CD8-positive, alpha-beta T cell (primary cell): ENCODE measurements at regions of chr6 and their contacts with region 1.

Region 1: GRCh38 chr6:75526502-75527127 is 33.0 kb upstream of the FILIP1 start:
- DNase-seq: peak in 8 of 9 experiments; percentile 12 to 76 (median 42)
- ATAC-seq: peak; percentile 84
- H3K4me3 ChIP-seq: no peak overlapping the region
- H3K4me3 Mint-ChIP-seq: no peak overlapping the region
- H3K27ac ChIP-seq: no peak overlapping the region
- H3K27ac Mint-ChIP-seq: no peak overlapping the region
- H3K4me1 ChIP-seq: no peaks in the 10 kb centered on the region
- H3K4me1 Mint-ChIP-seq: no peaks in the 10 kb centered on the region
- H3K27me3 ChIP-seq: peaks cover 0 to 3% of the 10 kb centered on the region in 2 experiments
- H3K27me3 Mint-ChIP-seq: peaks cover 36% of the 10 kb centered on the region
- CTCF ChIP-seq: peak; percentile 66

Region 2: DNA sequence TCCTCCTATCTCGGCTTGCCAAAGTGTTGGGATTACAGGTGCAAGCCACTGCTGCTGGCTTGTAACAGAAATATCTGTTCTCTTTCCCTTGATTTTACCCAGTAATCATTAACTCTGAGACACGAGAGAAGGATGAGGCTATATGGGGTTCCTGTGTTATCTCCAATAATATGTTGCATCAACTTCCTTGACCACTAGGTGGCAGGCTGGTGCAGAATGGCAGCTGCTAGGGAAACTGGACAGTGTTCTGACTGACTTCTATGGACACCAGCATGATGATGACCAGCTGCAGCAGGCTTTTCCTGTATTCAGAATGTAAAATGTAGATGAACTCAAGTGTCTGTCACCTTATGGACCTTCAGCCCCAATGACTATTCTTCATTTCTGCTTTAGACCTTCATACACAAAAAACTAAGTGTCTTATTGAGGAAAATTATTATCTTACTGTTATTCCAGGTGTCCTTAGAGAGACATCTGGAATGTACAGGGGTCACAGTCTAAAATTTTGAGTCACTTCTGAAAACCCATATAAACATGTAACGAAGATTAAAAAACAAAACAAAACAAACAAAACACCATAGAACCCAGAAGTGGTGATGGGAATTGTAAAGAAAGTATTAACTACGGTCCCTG is 1851.0 kb before region 1 on chr6:
- CTCF ChIA-PET with region 1: no interaction called
- POLR2A ChIA-PET with region 1: no interaction called
- intact Hi-C with region 1: loop called in 1 of 2 experiments (anchors 10 kb)
- DNase-seq: peak; percentile 45 to 73 (median 69)
- ATAC-seq: peak; percentile 75
- H3K4me3 ChIP-seq: no peak overlapping the region
- H3K4me3 Mint-ChIP-seq: no peak overlapping the region
- H3K27ac ChIP-seq: no peak overlapping the region
- H3K27ac Mint-ChIP-seq: no peak overlapping the region
- H3K4me1 ChIP-seq: no peaks in the 10 kb centered on the region
- H3K4me1 Mint-ChIP-seq: no peaks in the 10 kb centered on the region
- H3K27me3 ChIP-seq: peaks cover 0 to 2% of the 10 kb centered on the region in 2 experiments
- H3K27me3 Mint-ChIP-seq: peaks cover 22% of the 10 kb centered on the region
- CTCF ChIP-seq: peak; percentile 90

Region 3: GRCh38 chr6:73739096-73739495 is 1787.5 kb before region 1 on chr6:
- CTCF ChIA-PET with region 1: no interaction called
- POLR2A ChIA-PET with region 1: no interaction called
- intact Hi-C with region 1: loop called (anchors 1 to 2 kb)
- DNase-seq: peak in 2 of 9 experiments; percentile 71 to 76
- ATAC-seq: peak; percentile 77
- H3K4me3 ChIP-seq: no peak overlapping the region
- H3K4me3 Mint-ChIP-seq: no peak overlapping the region
- H3K27ac ChIP-seq: no peak overlapping the region
- H3K27ac Mint-ChIP-seq: no peak overlapping the region
- H3K4me1 ChIP-seq: no peaks in the 10 kb centered on the region
- H3K4me1 Mint-ChIP-seq: no peaks in the 10 kb centered on the region
- H3K27me3 ChIP-seq: no peaks in the 10 kb centered on the region
- H3K27me3 Mint-ChIP-seq: no peaks in the 10 kb centered on the region
- CTCF ChIP-seq: peak; percentile 85

Region 4: GRCh38 chr6:73854998-73855718 is 1671.5 kb before region 1 on chr6:
- CTCF ChIA-PET with region 1: no interaction called
- POLR2A ChIA-PET with region 1: no interaction called
- intact Hi-C with region 1: loop called (anchors 5 to 10 kb)
- DNase-seq: peak in 3 of 9 experiments; percentile 27 to 61 (median 57)
- ATAC-seq: no peak
- H3K4me3 ChIP-seq: no peak overlapping the region
- H3K4me3 Mint-ChIP-seq: no peak overlapping the region
- H3K27ac ChIP-seq: no peak overlapping the region
- H3K27ac Mint-ChIP-seq: no peak overlapping the region
- H3K4me1 ChIP-seq: no peaks in the 10 kb centered on the region
- H3K4me1 Mint-ChIP-seq: no peaks in the 10 kb centered on the region
- H3K27me3 ChIP-seq: no peaks in the 10 kb centered on the region
- H3K27me3 Mint-ChIP-seq: no peaks in the 10 kb centered on the region
- CTCF ChIP-seq: peak; percentile 64

Region 5: DNA sequence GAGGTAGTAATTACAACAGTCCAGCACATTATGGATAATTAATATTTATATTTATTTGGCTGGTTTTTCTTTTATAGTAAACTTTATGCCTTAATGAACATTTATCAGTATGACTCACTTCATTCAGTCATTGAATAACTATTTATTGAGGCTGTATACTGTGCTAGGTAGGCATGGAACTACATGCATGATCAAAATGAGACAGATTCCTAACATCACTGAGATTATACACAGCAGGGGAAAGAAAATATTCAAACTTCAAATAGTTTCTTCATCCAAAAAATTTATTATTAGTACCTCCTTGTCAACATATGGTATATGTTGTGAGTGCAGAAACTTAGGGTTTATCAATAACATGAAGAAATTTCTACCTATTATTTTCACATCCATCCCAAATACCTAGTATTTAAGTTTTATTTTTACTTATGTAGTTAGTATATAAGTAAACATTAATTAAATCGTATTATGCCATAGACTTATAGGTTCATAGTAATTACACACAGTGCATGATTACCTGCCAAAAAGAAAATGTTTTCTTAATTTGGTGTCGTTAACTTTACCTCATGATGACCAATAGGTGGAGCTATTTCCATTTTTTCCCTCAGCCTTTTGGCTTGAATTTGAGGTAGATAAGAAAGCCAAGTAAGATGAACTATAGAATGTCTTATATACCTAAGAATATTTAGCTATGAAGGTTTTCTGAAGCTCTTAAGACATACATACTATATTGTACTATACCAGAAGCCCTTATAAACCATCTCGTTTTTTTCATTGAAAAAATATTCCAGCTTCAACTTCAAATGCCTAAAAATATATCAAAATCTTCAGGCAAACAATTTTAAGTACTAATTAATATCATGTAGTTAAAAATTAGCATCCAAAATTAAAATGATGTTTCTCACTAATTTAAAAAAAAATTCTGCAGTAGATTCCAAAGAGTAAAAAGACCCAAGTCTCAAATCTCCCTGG is 229.5 kb before region 1 on chr6:
- CTCF ChIA-PET with region 1: interaction called, 8 read pairs
- POLR2A ChIA-PET with region 1: no interaction called
- intact Hi-C with region 1: loop called (anchors 1 to 2 kb)
- DNase-seq: peak in 2 of 9 experiments; percentile 65 to 76
- ATAC-seq: peak; percentile 54
- H3K4me3 ChIP-seq: no peak overlapping the region
- H3K4me3 Mint-ChIP-seq: no peak overlapping the region
- H3K27ac ChIP-seq: no peak overlapping the region
- H3K27ac Mint-ChIP-seq: no peak overlapping the region
- H3K4me1 ChIP-seq: no peaks in the 10 kb centered on the region
- H3K4me1 Mint-ChIP-seq: no peaks in the 10 kb centered on the region
- H3K27me3 ChIP-seq: no peaks in the 10 kb centered on the region
- H3K27me3 Mint-ChIP-seq: no peaks in the 10 kb centered on the region
- CTCF ChIP-seq: peak; percentile 79

Region 6: DNA sequence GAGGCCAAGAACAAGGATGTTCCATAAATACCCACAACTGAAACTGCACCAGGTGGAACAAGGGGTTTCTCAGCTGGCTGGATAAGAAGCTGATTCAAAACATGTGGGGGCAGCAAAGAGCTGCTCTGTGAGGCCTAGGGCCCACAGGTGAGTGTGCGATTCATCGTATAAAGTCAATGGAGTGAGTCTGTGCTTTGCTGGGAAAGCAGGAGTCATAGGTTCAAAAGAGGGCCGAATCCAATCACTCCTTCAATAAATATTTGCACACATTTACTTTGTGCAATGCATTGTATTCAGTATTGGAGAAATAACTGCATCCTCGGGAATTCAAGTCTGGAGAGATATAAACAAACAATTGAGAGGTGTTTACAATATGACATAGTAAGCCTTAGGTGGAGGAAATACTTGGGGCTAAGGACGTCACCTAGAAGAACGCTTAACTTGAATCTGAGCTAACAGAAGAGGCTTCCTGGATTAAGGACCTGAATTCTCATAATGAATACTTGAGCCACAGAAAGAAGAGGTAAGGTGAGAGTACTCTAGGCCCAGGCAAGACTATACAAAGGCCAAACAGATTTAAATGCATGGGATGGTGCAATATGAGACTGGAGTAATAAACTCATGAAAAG is 158.3 kb before region 1 on chr6:
- CTCF ChIA-PET with region 1: no interaction called
- POLR2A ChIA-PET with region 1: no interaction called
- intact Hi-C with region 1: no loop called
- DNase-seq: peak in 2 of 9 experiments; percentile 2 to 3
- ATAC-seq: no peak
- H3K4me3 ChIP-seq: no peak overlapping the region
- H3K4me3 Mint-ChIP-seq: no peak overlapping the region
- H3K27ac ChIP-seq: no peak overlapping the region
- H3K27ac Mint-ChIP-seq: no peak overlapping the region
- H3K4me1 ChIP-seq: no peaks in the 10 kb centered on the region
- H3K4me1 Mint-ChIP-seq: no peaks in the 10 kb centered on the region
- H3K27me3 ChIP-seq: peaks cover 0 to 5% of the 10 kb centered on the region in 2 experiments
- H3K27me3 Mint-ChIP-seq: peaks cover 2% of the 10 kb centered on the region
- CTCF ChIP-seq: no peak

Region 7: DNA sequence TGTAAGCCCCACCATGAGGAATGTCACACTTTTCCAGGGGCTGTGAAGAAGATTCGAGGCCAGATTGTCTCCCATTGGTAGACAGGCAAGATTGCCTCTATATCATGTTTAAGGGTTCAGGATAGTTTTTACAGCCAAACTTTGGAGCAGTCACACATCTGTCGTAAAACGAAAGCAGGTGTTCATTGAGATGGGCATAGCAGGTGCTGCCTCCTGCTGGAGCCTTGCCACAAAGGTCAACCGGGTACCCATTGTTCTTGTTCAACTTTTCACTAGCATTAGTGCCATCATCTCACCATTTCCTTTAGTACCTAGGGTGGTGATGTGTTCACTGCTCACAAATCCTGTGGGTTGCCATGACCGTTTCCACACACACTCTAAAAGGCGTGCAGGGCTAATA is 1738.4 kb after region 1 on chr6:
- CTCF ChIA-PET with region 1: no interaction called
- POLR2A ChIA-PET with region 1: no interaction called
- intact Hi-C with region 1: no loop called
- DNase-seq: no peak
- ATAC-seq: no peak
- H3K4me3 ChIP-seq: no peak overlapping the region
- H3K4me3 Mint-ChIP-seq: no peak overlapping the region
- H3K27ac ChIP-seq: no peak overlapping the region
- H3K27ac Mint-ChIP-seq: no peak overlapping the region
- H3K4me1 ChIP-seq: no peaks in the 10 kb centered on the region
- H3K4me1 Mint-ChIP-seq: no peaks in the 10 kb centered on the region
- H3K27me3 ChIP-seq: no peaks in the 10 kb centered on the region
- H3K27me3 Mint-ChIP-seq: no peaks in the 10 kb centered on the region
- CTCF ChIP-seq: no peak